Lower leg skin (tissue), 4 donors: ENCODE measurements at regions of chr1 and their contacts with region 1.

Region 1: GRCh38 chr1:54944610-54945544 is 35.6 kb upstream of the TMEM61 start:
- DNase-seq: peak in 1 of 2 donors; percentile 62
- H3K4me3 ChIP-seq: no peak overlapping the region
- CTCF ChIP-seq: peak in 1 of 3 donors; percentile 48
- POLR2A ChIP-seq: no peak

Region 2: GRCh38 chr1:54996359-54996868 is 51.5 kb after region 1 on chr1:
- intact Hi-C with region 1: loop called (anchors 10 kb)
- DNase-seq: peak; percentile 28 to 94
- H3K4me3 ChIP-seq: no peak overlapping the region
- CTCF ChIP-seq: peak in 1 of 3 donors; percentile 83
- POLR2A ChIP-seq: no peak